ENCODE measurements at regions of chr12 and their contacts with region 1.

Region 1: DNA sequence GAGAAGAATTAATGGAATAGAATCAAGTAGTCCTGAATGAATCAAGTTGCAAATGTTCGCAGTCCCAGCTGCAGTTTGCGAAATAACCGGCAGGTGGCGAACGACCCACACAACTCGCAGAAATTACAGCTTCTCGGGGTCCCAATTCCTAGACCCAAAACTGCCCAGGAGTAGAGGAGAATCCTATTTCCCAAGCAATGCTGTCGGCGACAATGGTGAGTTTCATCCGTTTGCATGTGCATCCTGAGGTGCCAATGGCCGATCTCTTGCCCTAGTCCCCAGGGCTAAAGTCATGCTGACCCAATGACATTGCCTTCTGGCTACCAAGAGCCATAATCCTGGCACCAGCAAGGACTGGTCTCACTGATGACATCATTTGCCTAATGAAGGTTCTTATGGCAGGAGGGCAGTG is 8.5 kb upstream of the ASCL1 start:
- DNase-seq: peak; percentile 49
- H3K4me3 ChIP-seq: no peak overlapping the region
- H3K27ac ChIP-seq: no peak overlapping the region
- H3K4me1 ChIP-seq: no peaks in the 10 kb centered on the region
- H3K27me3 ChIP-seq: peaks cover 15 to 19% of the 10 kb centered on the region in 2 experiments
- CTCF ChIP-seq: peak; percentile 70 to 80
- POLR2A ChIP-seq: no peak

Region 2: GRCh38 chr12:102960766-102961465 is 12.0 kb after region 1 on chr12:
- CTCF ChIA-PET with region 1: interaction called, 15 read pairs
- POLR2A ChIA-PET with region 1: interaction called, 3 read pairs
- dilution Hi-C with region 1: no loop called
- intact Hi-C with region 1: no loop called
- DNase-seq: no peak
- H3K4me3 ChIP-seq: no peak overlapping the region
- H3K27ac ChIP-seq: no peak overlapping the region
- H3K4me1 ChIP-seq: peaks cover 4% of the 10 kb centered on the region
- H3K27me3 ChIP-seq: peaks cover 50 to 75% of the 10 kb centered on the region in 2 experiments
- CTCF ChIP-seq: no peak
- POLR2A ChIP-seq: no peak

Region 3: GRCh38 chr12:103181366-103182152 is 232.6 kb after region 1 on chr12:
- CTCF ChIA-PET with region 1: no interaction called
- POLR2A ChIA-PET with region 1: no interaction called
- dilution Hi-C with region 1: no loop called
- intact Hi-C with region 1: no loop called
- DNase-seq: no peak
- H3K4me3 ChIP-seq: no peak overlapping the region
- H3K27ac ChIP-seq: no peak overlapping the region
- H3K4me1 ChIP-seq: no peaks in the 10 kb centered on the region
- H3K27me3 ChIP-seq: no peaks in the 10 kb centered on the region
- CTCF ChIP-seq: no peak
- POLR2A ChIP-seq: no peak

Region 4: DNA sequence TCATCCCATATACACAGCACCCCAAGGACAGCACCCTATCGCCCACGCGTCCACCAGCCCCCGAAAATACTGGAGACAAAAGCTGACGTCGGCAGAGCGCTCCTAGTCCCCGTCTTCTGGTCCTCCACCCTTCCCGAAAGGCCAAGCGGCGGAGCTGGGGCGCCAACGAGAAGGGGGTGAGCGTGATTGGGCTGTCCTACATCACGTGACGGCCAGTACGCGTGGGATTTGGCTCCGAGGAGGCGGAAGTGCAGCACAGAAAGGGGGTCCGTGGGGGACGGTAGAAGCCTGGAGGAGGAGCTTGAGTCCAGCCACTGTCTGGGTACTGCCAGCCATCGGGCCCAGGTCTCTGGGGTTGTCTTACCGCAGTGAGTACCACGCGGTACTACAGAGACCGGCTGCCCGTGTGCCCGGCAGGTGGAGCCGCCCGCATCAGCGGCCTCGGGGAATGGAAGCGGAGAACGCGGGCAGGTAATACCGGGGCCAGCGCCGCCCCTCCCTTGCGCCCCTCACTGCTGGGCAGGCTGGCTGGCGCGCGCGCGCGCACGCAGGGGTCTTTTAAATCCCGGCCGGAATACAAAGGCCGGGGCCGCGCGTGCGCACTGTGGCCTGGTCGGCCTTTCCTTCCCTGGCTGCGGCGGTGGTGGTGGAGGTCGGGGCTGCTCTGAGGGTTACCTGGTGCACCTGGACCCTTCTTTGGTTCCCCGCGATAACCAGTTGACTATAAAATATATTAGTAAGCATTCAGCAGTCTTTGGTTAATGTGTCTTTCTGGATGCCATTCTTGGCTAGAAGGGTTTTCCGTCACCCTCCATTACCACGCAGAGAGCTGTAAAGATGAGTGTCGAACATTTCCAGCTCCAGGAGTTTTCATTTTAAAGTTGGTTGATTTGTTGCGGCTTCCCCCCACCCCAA is 1016.9 kb after region 1 on chr12 and contains the start of gene TDG:
- CTCF ChIA-PET with region 1: no interaction called
- POLR2A ChIA-PET with region 1: no interaction called
- dilution Hi-C with region 1: no loop called
- intact Hi-C with region 1: no loop called
- DNase-seq: peak; percentile 99
- H3K4me3 ChIP-seq: peak within 1 kb of the TSS; percentile 88 to 98 (median 93)
- H3K27ac ChIP-seq: peak within 1 kb of the TSS; percentile 74
- H3K4me1 ChIP-seq: peaks cover 10% of the 10 kb centered on the region
- H3K27me3 ChIP-seq: no peaks in the 10 kb centered on the region
- CTCF ChIP-seq: peak in 1 of 2 donors; percentile 14
- POLR2A ChIP-seq: peak; percentile 99
- total RNA-seq, gene TDG: 35.1 and 36.8 TPM in 2 replicates